ENCODE measurements at regions of chr3 and their contacts with region 1.

Region 1: GRCh38 chr3:16884084-16884747 is 539 bp upstream of the PLCL2 start:
- DNase-seq: peak; percentile 84
- H3K4me3 Mint-ChIP-seq: peak overlapping the region; percentile 93
- H3K27ac Mint-ChIP-seq: peak overlapping the region; percentile 93
- H3K4me1 Mint-ChIP-seq: peaks cover 23% of the 10 kb centered on the region
- H3K27me3 Mint-ChIP-seq: no peaks in the 10 kb centered on the region

Region 2: DNA sequence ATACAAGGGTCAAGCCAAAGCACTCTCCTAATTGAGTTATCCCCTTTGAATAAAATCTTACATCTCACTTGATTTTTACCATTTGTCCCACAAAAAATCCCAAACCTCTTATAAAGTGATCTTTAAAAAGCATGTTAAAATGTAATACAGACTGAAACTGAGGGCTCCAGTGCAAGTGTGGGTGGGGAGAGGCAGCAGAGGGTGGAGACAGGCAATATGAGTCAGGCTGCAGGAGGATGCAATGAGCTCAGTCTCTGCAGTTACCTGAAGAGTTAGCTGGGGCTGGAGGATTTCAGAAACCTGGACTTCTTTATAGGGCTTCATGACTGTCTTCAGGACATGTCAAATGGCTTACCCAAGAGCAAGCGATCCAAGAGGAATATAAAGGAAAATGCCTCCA is 1348.5 kb before region 1 on chr3:
- CTCF ChIA-PET with region 1: no interaction called
- POLR2A ChIA-PET with region 1: no interaction called
- intact Hi-C with region 1: no loop called
- DNase-seq: peak; percentile 73
- H3K4me3 Mint-ChIP-seq: no peak overlapping the region
- H3K27ac Mint-ChIP-seq: peak overlapping the region; percentile 61
- H3K4me1 Mint-ChIP-seq: peaks cover 44% of the 10 kb centered on the region
- H3K27me3 Mint-ChIP-seq: no peaks in the 10 kb centered on the region

Region 3: GRCh38 chr3:16511681-16512434 is 372.4 kb before region 1 on chr3:
- CTCF ChIA-PET with region 1: no interaction called
- POLR2A ChIA-PET with region 1: no interaction called
- intact Hi-C with region 1: loop called (anchors 5 kb)
- DNase-seq: peak; percentile 92
- H3K4me3 Mint-ChIP-seq: peak overlapping the region; percentile 94
- H3K27ac Mint-ChIP-seq: peak overlapping the region; percentile 96
- H3K4me1 Mint-ChIP-seq: peaks cover 74% of the 10 kb centered on the region
- H3K27me3 Mint-ChIP-seq: no peaks in the 10 kb centered on the region

Region 4: DNA sequence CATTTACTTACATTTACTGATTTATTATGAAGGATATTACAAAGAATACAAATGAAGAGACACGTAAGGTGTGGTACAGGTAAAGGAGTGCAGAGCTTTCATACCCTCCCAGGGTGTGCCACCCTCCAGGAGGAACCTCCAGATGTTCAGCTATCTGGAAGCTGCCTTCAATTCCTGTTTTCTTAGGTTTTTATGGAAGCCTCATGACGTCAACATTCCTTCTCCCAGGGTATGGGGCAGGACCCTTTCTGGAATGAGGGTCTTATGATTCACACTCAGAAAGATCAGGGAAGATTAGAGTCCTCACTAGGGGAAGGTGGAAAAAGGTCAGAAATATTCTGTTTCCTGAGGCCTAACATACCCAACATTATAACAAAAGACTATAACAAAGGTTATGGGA is 99.3 kb before region 1 on chr3:
- CTCF ChIA-PET with region 1: no interaction called
- POLR2A ChIA-PET with region 1: no interaction called
- intact Hi-C with region 1: no loop called
- DNase-seq: no peak
- H3K4me3 Mint-ChIP-seq: no peak overlapping the region
- H3K27ac Mint-ChIP-seq: no peak overlapping the region
- H3K4me1 Mint-ChIP-seq: peaks cover 5% of the 10 kb centered on the region
- H3K27me3 Mint-ChIP-seq: no peaks in the 10 kb centered on the region

Region 5: DNA sequence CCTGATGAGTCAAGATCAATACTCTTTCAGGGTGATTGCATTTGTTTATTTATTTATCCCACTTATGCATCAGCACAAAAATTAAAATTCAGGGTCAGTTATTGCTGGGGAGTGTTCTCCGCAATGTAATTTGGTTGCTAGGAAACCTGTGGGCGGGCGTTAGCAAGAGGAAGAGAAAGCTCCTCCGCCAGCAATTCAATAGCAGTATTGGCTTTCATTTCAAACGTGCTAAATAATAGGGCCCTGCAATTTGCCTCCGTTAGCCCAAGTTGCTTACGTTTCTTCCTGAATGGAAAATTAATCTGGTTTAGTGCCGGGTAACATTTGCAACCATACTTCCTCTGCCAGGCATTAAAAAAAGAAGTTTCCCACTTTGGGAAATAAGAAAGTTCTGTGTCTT is 35.0 kb before region 1 on chr3:
- CTCF ChIA-PET with region 1: interaction called, 25 read pairs
- POLR2A ChIA-PET with region 1: interaction called, 5 read pairs
- intact Hi-C with region 1: loop called (anchors 1 kb)
- DNase-seq: peak; percentile 78
- H3K4me3 Mint-ChIP-seq: peak overlapping the region; percentile 57
- H3K27ac Mint-ChIP-seq: peak overlapping the region; percentile 16
- H3K4me1 Mint-ChIP-seq: peaks cover 49% of the 10 kb centered on the region
- H3K27me3 Mint-ChIP-seq: no peaks in the 10 kb centered on the region

Region 6: GRCh38 chr3:16912400-16913263 is 28.4 kb after region 1 on chr3:
- CTCF ChIA-PET with region 1: interaction called, 10 read pairs
- POLR2A ChIA-PET with region 1: no interaction called
- intact Hi-C with region 1: loop called (anchors 1 kb)
- DNase-seq: no peak
- H3K4me3 Mint-ChIP-seq: no peak overlapping the region
- H3K27ac Mint-ChIP-seq: peak overlapping the region; percentile 71
- H3K4me1 Mint-ChIP-seq: peaks cover 70% of the 10 kb centered on the region
- H3K27me3 Mint-ChIP-seq: no peaks in the 10 kb centered on the region

Region 7: DNA sequence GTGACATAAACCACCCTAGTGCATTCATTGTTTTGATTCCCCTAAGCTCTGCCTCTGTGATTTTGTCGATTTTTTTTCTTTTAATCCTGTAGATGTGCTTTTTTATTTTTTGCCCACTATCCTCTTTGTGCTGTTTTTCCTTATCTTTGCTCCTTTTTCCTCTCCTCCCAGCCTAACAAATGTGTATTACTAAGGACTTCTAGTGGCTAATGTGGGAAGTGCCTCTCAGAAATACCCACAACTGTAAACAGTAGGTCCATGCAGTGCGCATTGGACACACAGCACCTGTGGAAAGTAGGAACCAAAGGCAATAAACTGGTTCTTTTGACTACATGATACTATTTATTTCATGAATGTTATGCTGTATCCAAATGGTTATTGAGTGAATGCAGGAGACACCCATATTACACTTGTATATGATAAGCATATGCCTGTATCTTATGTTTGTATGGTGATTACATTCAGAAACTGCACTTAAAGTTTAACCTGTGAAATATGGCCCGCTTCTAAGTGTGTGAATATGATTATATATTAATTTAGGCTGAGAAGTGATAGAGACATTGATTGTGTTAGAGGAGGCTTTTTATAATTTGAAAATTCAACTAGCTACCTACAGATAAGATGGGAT is 148.3 kb after region 1 on chr3:
- CTCF ChIA-PET with region 1: interaction called, 13 read pairs
- POLR2A ChIA-PET with region 1: interaction called, 3 read pairs
- intact Hi-C with region 1: no loop called
- DNase-seq: no peak
- H3K4me3 Mint-ChIP-seq: no peak overlapping the region
- H3K27ac Mint-ChIP-seq: no peak overlapping the region
- H3K4me1 Mint-ChIP-seq: peaks cover 72% of the 10 kb centered on the region
- H3K27me3 Mint-ChIP-seq: no peaks in the 10 kb centered on the region

Region 8: GRCh38 chr3:17742108-17742879 is 858.1 kb after region 1 on chr3 and contains the start of gene TBC1D5:
- CTCF ChIA-PET with region 1: interaction called, 3 read pairs
- POLR2A ChIA-PET with region 1: no interaction called
- intact Hi-C with region 1: loop called (anchors 10 kb)
- DNase-seq: peak; percentile 96
- H3K4me3 Mint-ChIP-seq: peak within 1 kb of the TSS; percentile 94
- H3K27ac Mint-ChIP-seq: peak within 1 kb of the TSS; percentile 97
- H3K4me1 Mint-ChIP-seq: peaks cover 36% of the 10 kb centered on the region
- H3K27me3 Mint-ChIP-seq: no peaks in the 10 kb centered on the region
- total RNA-seq, gene TBC1D5: 49.2 to 53.7 TPM

Measured in activated CD4-positive, alpha-beta memory T cell treated with anti-CD3 and anti-CD28 coated beads for 36 hours (primary cell).